Activated CD4-positive, alpha-beta memory T cell treated with anti-CD3 and anti-CD28 coated beads for 36 hours (primary cell): ENCODE measurements at regions of chr20 and their contacts with region 1.

Region 1: GRCh38 chr20:38926142-38926933 is at the start of gene FAM83D:
- DNase-seq: peak; percentile 98
- H3K4me3 Mint-ChIP-seq: peak within 1 kb of the TSS; percentile 81
- H3K27ac Mint-ChIP-seq: peak within 1 kb of the TSS; percentile 14
- H3K4me1 Mint-ChIP-seq: peaks cover 26% of the 10 kb centered on the region
- H3K27me3 Mint-ChIP-seq: no peaks in the 10 kb centered on the region
- total RNA-seq, gene FAM83D: 11.1 to 11.2 TPM

Region 2: DNA sequence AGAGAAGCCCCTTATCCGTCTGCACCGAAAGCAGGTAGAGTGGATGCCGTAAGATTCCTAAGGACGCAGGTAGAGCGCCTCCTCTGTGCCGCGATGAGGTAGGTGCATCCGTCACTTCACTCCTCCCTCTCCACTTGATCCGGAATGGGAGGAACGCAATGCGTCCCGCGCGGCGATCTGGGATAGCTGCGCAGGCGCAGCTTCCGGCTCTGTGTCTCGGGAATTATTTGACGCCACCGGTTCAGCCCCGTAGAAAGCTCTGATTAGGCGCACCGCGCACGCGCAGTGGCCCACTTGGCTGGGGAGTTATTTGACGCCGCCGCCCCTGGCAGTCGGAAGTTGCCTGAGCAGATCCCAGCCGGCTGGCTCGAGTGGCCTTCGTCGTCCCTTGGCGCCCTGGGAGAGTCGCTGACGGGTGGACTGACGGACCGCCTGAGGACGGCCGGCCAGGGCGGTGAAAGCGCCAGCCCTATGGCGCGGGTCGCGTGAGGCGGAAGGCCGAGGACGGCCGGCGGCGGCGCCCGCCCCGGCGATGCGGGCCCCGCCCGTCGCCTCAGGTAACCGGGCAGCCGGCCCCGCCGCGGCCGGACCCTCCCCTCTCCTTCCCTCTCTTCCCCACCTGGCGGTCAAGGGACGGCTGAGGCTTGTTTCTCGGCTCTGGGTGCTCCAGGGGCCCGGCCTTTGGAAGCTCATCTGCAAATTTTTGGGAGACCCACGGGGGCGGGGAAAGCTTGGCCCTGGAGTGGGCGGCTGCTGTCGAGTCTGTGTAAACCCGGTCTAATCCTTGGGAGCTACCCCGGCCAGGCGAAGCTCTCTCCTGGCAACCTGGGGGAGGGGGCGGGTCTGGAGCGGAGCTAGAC is 453.6 kb before region 1 on chr20 and contains the start of gene RALGAPB:
- CTCF ChIA-PET with region 1: no interaction called
- POLR2A ChIA-PET with region 1: no interaction called
- intact Hi-C with region 1: loop called (anchors 1 kb)
- DNase-seq: peak; percentile 99
- H3K4me3 Mint-ChIP-seq: peak within 1 kb of the TSS; percentile 84
- H3K27ac Mint-ChIP-seq: peak within 1 kb of the TSS; percentile 84
- H3K4me1 Mint-ChIP-seq: peaks cover 46% of the 10 kb centered on the region
- H3K27me3 Mint-ChIP-seq: no peaks in the 10 kb centered on the region
- total RNA-seq, gene RALGAPB: 25.7 to 25.8 TPM

Region 3: GRCh38 chr20:38885357-38885756 is 41.0 kb before region 1 on chr20:
- CTCF ChIA-PET with region 1: no interaction called
- POLR2A ChIA-PET with region 1: no interaction called
- intact Hi-C with region 1: no loop called
- DNase-seq: no peak
- H3K4me3 Mint-ChIP-seq: no peak overlapping the region
- H3K27ac Mint-ChIP-seq: peak overlapping the region; percentile 24
- H3K4me1 Mint-ChIP-seq: peaks cover 56% of the 10 kb centered on the region
- H3K27me3 Mint-ChIP-seq: no peaks in the 10 kb centered on the region

Region 4: DNA sequence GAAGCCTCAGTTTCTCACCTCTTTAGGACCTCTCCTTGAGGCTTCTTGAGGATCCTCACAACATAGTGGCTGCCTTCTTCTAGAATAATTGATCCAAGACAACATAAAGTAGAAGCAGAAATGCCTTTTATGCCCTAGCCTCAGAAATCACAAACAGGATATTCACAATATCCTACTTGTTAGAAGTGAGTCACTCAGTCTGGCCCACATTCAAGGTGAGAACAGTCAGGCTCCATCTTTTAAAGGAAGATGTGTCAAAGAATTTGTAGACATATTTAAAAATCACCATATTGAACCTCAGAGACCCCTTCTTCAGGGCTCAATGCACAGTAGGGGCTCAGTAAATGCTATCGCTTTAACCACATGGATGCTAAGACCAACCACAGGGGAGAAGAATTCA is 21.0 kb before region 1 on chr20:
- CTCF ChIA-PET with region 1: interaction called, 10 read pairs
- POLR2A ChIA-PET with region 1: no interaction called
- intact Hi-C with region 1: no loop called
- DNase-seq: no peak
- H3K4me3 Mint-ChIP-seq: no peak overlapping the region
- H3K27ac Mint-ChIP-seq: peak overlapping the region; percentile 47
- H3K4me1 Mint-ChIP-seq: peaks cover 5% of the 10 kb centered on the region
- H3K27me3 Mint-ChIP-seq: no peaks in the 10 kb centered on the region

Region 5: GRCh38 chr20:38997622-38998021 is 71.3 kb after region 1 on chr20:
- CTCF ChIA-PET with region 1: interaction called, 11 read pairs
- POLR2A ChIA-PET with region 1: interaction called, 5 read pairs
- intact Hi-C with region 1: no loop called
- DNase-seq: peak; percentile 83
- H3K4me3 Mint-ChIP-seq: no peak overlapping the region
- H3K27ac Mint-ChIP-seq: peak overlapping the region; percentile 9
- H3K4me1 Mint-ChIP-seq: peaks cover 22% of the 10 kb centered on the region
- H3K27me3 Mint-ChIP-seq: no peaks in the 10 kb centered on the region

Region 6: GRCh38 chr20:39049684-39050554 is 123.6 kb after region 1 on chr20:
- CTCF ChIA-PET with region 1: interaction called, 132 read pairs
- POLR2A ChIA-PET with region 1: interaction called, 3 read pairs
- intact Hi-C with region 1: loop called (anchors 1 kb)
- DNase-seq: peak; percentile 82
- H3K4me3 Mint-ChIP-seq: peak overlapping the region; percentile 80
- H3K27ac Mint-ChIP-seq: no peak overlapping the region
- H3K4me1 Mint-ChIP-seq: peaks cover 7% of the 10 kb centered on the region
- H3K27me3 Mint-ChIP-seq: peaks cover 1% of the 10 kb centered on the region